Endothelial cell of umbilical vein (primary cell): ENCODE measurements at regions of chr4 and their contacts with region 1.

Region 1: DNA sequence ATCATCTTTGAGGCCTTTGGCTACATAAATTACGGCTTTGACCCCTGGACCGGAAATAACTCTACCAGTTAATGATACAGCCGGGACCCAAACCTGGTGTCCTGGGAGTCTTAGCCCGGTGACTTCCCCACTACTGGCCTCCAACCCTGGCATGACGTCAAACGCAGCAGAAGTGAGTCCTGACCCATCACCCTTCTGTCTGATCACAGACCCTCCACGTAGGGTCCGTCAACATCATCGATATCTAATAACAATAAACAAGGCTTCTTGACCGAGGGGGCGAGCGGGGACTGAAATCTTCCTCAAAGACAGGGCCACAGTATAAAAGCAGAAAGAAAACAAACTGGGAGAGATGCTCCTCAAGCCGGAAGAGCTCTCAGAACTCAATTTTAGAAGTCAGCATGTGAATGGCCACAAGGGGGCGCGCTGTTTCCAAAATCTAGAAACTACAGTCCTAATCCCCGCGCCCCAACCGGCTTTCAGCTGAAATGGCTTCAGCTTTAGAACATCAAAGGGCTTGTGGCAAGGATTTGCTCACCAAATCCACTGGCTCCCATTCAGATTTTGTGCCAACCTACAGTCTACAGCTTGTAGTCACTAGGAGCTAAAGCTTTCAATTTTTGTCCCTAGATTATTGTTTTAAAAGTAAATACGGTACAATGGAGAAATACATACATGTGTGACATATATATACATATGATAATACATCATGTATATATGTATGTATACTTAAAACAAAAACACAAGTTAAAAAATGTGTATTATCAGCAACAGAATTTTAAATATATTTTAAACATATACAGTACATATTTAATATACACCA is 46.4 kb upstream of the ENPP6 start:
- DNase-seq: peak; percentile 85
- H3K4me3 ChIP-seq: no peak overlapping the region
- H3K27ac ChIP-seq: no peak overlapping the region
- H3K4me1 ChIP-seq: peaks cover 23% of the 10 kb centered on the region
- H3K27me3 ChIP-seq: peaks cover 2 to 3% of the 10 kb centered on the region in 2 experiments
- CTCF ChIP-seq: peak; percentile 77 to 85
- POLR2A ChIP-seq: no peak

Region 2: DNA sequence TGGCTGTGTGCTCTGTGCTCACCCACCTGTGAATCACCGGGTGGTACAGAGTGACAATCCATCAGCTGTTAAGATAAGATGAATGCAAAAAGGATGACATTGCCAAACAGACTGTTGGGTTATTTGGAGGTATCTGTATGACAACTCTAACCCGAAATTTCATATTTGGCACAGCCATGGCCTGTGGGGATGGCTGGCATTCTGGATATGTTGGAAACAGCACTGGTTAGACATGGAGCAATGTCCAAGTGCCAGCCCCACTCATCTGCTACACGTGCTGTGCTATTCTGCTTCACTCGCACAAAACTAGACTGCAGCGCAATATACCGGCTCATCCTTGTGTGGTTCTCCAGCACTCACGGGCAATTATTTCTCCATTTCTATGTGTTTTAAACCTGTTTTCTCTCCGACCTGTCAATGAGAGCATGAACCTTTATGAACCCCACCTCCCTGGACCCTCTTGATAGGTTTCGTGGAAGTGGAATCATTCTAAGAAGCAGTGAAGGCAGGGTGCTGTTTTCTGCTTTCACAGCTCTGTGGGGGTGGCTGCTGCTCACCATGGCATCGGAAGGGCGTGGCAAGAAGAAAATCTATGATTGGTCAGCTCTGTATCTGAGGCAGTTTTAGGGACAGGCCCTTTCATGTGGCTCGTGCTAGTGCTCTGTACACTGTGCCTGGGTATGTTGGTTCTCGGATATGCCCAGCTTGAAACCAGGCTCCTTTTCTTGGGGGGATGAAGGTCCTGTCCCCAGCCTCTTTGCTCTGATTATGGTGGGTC is 141.3 kb before region 1 on chr4:
- CTCF ChIA-PET with region 1: no interaction called
- POLR2A ChIA-PET with region 1: no interaction called
- dilution Hi-C with region 1: no loop called
- intact Hi-C with region 1: no loop called
- DNase-seq: no peak
- H3K4me3 ChIP-seq: no peak overlapping the region
- H3K27ac ChIP-seq: no peak overlapping the region
- H3K4me1 ChIP-seq: no peaks in the 10 kb centered on the region
- H3K27me3 ChIP-seq: no peaks in the 10 kb centered on the region
- CTCF ChIP-seq: no peak
- POLR2A ChIP-seq: no peak

Region 3: GRCh38 chr4:184310171-184310567 is 46.0 kb after region 1 on chr4:
- CTCF ChIA-PET with region 1: interaction called, 5 read pairs
- POLR2A ChIA-PET with region 1: no interaction called
- dilution Hi-C with region 1: no loop called
- intact Hi-C with region 1: loop called (anchors 1 kb)
- DNase-seq: peak; percentile 28
- H3K4me3 ChIP-seq: no peak overlapping the region
- H3K27ac ChIP-seq: peak overlapping the region; percentile 21
- H3K4me1 ChIP-seq: no peaks in the 10 kb centered on the region
- H3K27me3 ChIP-seq: no peaks in the 10 kb centered on the region
- CTCF ChIP-seq: peak; percentile 20 to 22
- POLR2A ChIP-seq: no peak

Region 4: GRCh38 chr4:184474263-184475095 is 210.4 kb after region 1 on chr4 and contains the start of gene IRF2:
- CTCF ChIA-PET with region 1: interaction called, 40 read pairs
- POLR2A ChIA-PET with region 1: interaction called, 6 read pairs
- dilution Hi-C with region 1: no loop called
- intact Hi-C with region 1: loop called (anchors 1 kb)
- DNase-seq: peak; percentile 98
- H3K4me3 ChIP-seq: peak within 1 kb of the TSS; percentile 86 to 98 (median 96)
- H3K27ac ChIP-seq: peak within 1 kb of the TSS; percentile 82
- H3K4me1 ChIP-seq: peaks cover 26% of the 10 kb centered on the region
- H3K27me3 ChIP-seq: no peaks in the 10 kb centered on the region
- CTCF ChIP-seq: no peak
- POLR2A ChIP-seq: peak; percentile 74
- total RNA-seq, gene IRF2: 24.6 and 27.6 TPM in 2 replicates

Region 5: DNA sequence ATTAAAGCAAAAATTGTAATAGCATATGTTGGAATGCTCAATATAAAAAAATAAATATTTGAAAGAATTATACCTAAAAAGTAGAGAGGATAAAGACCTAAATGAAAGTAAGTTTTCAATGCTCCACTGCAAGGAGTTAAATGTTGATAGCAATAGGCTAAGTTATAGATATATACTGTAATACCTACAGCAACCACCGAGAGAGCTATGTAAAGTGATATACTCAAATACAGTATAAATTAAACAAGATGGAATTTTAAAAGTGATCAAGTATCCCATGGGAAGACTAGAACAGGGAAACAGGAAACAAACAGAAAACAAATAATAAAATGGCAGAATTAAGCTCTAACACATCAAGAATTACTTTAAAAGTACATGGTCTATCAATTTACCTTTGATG is 311.2 kb after region 1 on chr4:
- CTCF ChIA-PET with region 1: interaction called, 6 read pairs
- POLR2A ChIA-PET with region 1: no interaction called
- dilution Hi-C with region 1: no loop called
- intact Hi-C with region 1: loop called (anchors 1 kb)
- DNase-seq: peak; percentile 13
- H3K4me3 ChIP-seq: peak overlapping the region in 1 of 3 experiments; percentile 47
- H3K27ac ChIP-seq: peak overlapping the region; percentile 73
- H3K4me1 ChIP-seq: peaks cover 20% of the 10 kb centered on the region
- H3K27me3 ChIP-seq: no peaks in the 10 kb centered on the region
- CTCF ChIP-seq: no peak
- POLR2A ChIP-seq: no peak

Region 6: DNA sequence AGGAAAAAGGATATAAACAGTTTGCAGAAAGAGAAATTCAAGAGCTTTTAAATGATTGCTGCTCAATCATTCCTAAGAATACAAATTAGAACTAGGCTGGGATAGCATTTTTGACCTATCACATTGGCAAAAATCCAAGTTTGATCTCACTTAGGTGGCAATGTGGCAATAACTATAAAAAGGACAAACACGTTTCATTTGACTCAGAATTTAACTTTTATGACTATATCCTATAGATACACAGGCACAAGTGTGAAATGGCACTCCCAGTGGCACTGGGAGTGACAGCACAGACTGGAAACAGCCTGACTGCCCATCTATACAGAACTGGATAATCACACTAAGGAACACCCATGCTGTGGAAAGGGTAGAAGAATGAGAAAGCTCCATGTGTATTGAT is 458.7 kb after region 1 on chr4:
- CTCF ChIA-PET with region 1: interaction called, 11 read pairs
- POLR2A ChIA-PET with region 1: no interaction called
- dilution Hi-C with region 1: no loop called
- intact Hi-C with region 1: no loop called
- DNase-seq: no peak
- H3K4me3 ChIP-seq: no peak overlapping the region
- H3K27ac ChIP-seq: no peak overlapping the region
- H3K4me1 ChIP-seq: no peaks in the 10 kb centered on the region
- H3K27me3 ChIP-seq: no peaks in the 10 kb centered on the region
- CTCF ChIP-seq: no peak
- POLR2A ChIP-seq: no peak

Region 7: DNA sequence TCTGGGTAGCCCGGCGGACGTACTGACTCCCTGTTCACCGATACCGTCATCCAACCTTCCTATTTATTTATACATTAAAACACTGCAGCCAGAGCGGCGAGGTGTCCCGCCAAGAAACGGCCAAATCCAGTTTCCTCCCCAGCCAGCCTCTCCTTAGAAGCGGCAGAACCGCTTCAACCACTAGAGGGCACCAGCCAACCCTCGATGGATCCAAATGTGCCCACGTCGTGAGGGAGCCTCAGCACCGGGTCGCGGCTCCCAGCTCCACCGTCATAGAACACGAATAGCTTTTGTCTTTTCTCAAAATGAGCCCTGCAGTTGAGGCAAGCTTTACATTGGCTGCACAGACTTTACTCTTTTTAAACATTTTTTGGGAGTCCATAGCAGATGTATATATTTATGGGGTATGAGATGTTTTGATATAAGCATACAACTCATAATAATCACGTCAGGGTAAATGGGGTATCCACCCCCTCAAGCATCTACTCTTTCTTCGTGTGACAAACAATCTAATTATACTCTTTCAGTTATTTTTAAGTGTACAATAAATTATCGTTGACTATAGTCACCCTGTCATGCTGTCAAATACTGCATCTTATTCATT is 741.2 kb after region 1 on chr4:
- CTCF ChIA-PET with region 1: interaction called, 3 read pairs
- POLR2A ChIA-PET with region 1: no interaction called
- dilution Hi-C with region 1: no loop called
- intact Hi-C with region 1: loop called (anchors 5 kb)
- DNase-seq: peak; percentile 68
- H3K4me3 ChIP-seq: no peak overlapping the region
- H3K27ac ChIP-seq: no peak overlapping the region
- H3K4me1 ChIP-seq: no peaks in the 10 kb centered on the region
- H3K27me3 ChIP-seq: peaks cover 0 to 8% of the 10 kb centered on the region in 2 experiments
- CTCF ChIP-seq: peak; percentile 94 to 96
- POLR2A ChIP-seq: no peak